Motor neuron (in vitro differentiated cells): ENCODE measurements at regions of chr5 and their contacts with region 1.

Region 1: GRCh38 chr5:17216176-17216973 is 1.1 kb upstream of the BASP1 start:
- ATAC-seq: peak; percentile 52 to 81 (median 60)
- H3K4me3 ChIP-seq: peak overlapping the region; percentile 39 to 68 (median 47)
- H3K27ac ChIP-seq: peak overlapping the region; percentile 67 to 69
- H3K4me1 ChIP-seq: peaks cover 0 to 11% of the 10 kb centered on the region in 2 donors

Region 2: GRCh38 chr5:16791036-16791705 is 425.2 kb before region 1 on chr5:
- in situ Hi-C with region 1: loop called in 1 of 9 experiments (anchors 25 kb)
- ATAC-seq: peak in 7 of 8 experiments; percentile 40 to 82 (median 61)
- H3K4me3 ChIP-seq: no peak overlapping the region
- H3K27ac ChIP-seq: no peak overlapping the region
- H3K4me1 ChIP-seq: peaks cover 4 to 10% of the 10 kb centered on the region in 2 donors

Region 3: DNA sequence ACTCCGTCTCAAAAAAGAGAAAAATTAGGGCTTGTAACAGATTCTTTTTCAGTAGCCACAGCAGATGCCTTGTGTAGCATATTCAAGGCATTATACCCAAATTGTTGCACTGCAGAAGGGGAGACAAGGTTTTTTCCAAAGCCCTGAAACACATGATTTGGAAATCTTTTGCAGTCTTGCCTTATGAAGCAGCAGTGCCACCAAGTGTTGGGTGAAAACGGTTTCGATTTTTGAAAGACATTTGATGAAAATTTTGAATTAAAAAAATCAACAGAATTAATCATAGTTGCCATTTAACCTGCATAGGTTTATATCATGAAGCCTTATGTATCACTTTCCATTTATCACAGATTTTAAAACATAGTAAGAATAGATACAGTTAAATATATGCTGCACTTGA is 897.3 kb after region 1 on chr5:
- in situ Hi-C with region 1: loop called in 3 of 9 experiments (anchors 10 to 25 kb)
- ATAC-seq: peak in 1 of 8 experiments; percentile 22
- H3K4me3 ChIP-seq: no peak overlapping the region
- H3K27ac ChIP-seq: no peak overlapping the region
- H3K4me1 ChIP-seq: peaks cover 17 to 36% of the 10 kb centered on the region in 2 donors

Region 4: DNA sequence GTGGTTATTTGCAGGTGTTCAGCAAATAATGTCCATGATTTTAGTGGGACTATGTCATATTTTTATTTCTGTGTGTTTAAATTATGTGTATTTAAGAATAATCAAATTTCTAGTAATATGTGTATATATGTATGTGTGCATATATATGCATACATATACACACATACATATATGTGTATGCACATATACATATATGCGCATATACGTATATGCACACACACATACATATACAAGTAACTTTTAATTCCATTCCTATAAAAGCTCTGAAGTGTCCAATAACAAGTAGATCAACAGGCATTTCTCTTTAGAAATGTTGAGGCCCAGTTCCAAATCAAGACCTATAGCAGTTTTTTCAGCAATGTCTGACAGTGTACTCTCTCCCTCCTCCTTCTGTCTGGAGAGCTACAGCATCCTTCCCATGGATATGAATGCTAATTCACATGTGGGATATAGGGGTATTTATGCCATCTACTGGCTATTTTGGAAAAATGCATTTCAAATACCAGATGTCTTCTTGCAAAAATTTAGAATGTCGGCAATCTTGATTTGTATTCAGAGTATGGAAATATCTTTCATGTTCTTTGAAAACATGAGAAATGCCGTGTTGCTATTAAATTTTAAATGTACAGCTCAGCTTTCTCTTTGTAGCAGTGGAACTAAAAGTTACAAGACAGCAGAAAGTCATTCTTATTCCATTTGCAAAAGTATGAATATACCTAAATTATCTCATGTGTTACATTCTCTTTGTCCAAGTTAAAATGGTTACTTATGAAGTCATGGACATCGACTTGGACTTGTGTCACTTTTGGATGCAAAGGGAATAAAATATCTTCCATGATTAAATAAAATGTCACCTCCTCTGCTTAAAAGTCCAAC is 1065.5 kb after region 1 on chr5:
- in situ Hi-C with region 1: loop called in 2 of 9 experiments (anchors 25 kb)
- ATAC-seq: peak in 6 of 8 experiments; percentile 50 to 91 (median 86)
- H3K4me3 ChIP-seq: no peak overlapping the region
- H3K27ac ChIP-seq: no peak overlapping the region
- H3K4me1 ChIP-seq: no peaks in the 10 kb centered on the region

Region 5: GRCh38 chr5:18299166-18299565 is 1082.8 kb after region 1 on chr5:
- in situ Hi-C with region 1: loop called in 8 of 9 experiments (anchors 10 to 25 kb)
- ATAC-seq: no peak
- H3K4me3 ChIP-seq: no peak overlapping the region
- H3K27ac ChIP-seq: no peak overlapping the region
- H3K4me1 ChIP-seq: no peaks in the 10 kb centered on the region

Region 6: DNA sequence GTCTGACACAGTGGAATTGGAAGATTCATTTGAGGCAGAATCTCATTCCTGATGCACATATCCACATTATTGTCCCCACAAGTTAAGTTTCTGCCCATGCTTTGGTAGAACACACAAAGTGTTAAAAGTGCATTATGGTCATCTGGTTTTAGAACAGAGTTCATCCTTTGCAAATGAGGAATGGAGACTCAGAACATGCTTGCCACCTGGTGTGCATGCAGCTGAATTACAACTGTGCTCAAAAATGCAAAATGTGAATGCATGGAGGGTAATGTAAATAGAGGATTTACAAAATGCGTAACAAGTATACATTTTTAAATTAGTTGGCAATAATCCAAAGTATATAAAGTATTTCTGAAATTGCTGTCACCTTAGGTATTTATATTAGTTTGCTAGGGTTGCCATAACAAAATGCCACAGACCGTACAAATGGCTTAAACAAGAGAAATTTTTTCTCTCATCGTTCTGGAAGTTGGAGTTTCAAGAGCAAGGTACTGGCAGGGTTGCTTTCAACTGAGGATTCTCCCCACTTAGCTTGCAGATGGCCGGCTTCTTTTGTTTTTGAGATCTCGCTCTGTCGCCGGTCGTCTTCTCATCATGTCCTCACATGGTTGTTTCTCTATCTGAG is 1089.0 kb after region 1 on chr5:
- in situ Hi-C with region 1: loop called in 6 of 9 experiments (anchors 10 to 25 kb)
- ATAC-seq: peak; percentile 36 to 97 (median 54)
- H3K4me3 ChIP-seq: no peak overlapping the region
- H3K27ac ChIP-seq: no peak overlapping the region
- H3K4me1 ChIP-seq: no peaks in the 10 kb centered on the region

Region 7: DNA sequence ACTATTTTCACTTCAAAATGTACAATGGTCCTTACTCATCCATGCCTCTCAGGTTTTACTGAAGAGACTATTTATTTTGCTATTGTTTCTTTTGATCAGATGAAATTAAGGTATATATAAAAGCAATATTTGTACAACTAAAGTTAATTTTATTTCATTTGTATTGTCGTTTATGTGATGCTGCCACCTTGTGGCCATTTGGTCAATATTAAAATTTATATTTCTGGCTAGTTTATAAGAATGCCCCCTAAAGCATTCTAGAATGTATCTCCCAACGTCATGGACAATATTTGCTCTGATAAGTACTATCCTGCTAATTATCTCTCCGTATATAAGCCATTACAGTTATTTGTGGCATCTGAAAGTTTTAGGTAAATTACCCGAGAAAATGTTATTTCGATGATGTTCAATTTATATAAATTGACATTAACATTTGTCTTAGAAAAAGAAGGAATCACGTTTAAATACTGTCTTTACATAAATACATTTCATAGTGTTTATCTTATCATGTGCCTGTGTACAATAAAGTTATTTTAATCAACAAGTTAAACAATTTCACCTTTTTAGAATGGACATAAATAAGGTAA is 1097.9 kb after region 1 on chr5:
- in situ Hi-C with region 1: loop called in 6 of 9 experiments (anchors 10 to 25 kb)
- ATAC-seq: no peak
- H3K4me3 ChIP-seq: no peak overlapping the region
- H3K27ac ChIP-seq: no peak overlapping the region
- H3K4me1 ChIP-seq: no peaks in the 10 kb centered on the region